Activated T-helper 2 cell treated with anti-CD3 and anti-CD28 coated beads, Interferon-gamma antibody, Interleukin-2, Interleukin-4, amounts not matched to agents 10 μg/mL and 5 μg/mL and 100 μg/mL, durations not matched to agents 14 hours and 24 hours and 36 hours (primary cell): ENCODE measurements at regions of chr10 and their contacts with region 1.

Region 1: DNA sequence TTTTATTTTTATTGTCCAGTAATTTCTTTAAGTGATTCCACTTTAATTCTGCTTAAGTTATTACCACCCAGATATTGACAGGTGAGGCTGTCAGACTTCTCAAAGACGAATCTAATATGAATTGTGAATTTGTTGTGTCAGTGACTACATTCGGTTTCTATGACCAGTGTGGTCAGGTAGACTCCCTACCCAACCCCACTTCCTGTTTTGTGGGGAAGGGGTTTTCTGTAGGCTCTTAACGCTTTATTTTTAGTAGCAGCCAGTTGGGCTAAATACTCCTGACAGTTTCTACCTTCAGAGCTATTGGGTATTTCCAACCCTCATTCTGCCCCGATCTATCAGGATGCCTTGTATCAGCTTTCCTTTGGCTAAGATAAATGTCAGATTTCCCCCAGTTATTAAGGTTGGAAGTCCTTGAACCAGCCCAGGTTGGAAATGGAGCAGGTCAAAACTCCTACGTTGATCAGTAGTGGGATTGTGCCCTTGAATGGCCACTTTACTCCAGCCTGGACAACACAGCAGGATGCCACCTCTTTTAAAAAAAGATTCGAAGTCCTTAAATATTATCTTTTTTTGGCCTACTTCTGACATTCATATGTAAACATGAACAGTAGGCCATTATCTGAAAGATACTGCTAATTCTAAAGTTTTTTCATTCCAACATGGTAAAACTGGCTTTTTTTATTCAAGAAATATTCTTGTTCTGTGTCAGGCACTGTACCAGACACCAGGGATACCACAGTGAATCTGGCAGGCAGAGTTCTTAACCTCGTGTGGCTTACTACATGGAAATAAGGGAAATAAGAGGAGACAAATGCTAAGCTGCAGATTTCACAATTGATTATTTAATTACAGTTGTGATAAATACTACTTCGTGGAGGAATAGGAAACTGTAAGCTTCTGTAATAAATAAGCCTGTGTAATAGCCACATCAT is 133.3 kb upstream of the SAMD8 start:
- DNase-seq: peak; percentile 60
- H3K4me3 Mint-ChIP-seq: peak overlapping the region; percentile 37
- H3K27ac Mint-ChIP-seq: peak overlapping the region; percentile 74
- H3K4me1 Mint-ChIP-seq: peaks cover 49% of the 10 kb centered on the region
- H3K27me3 Mint-ChIP-seq: no peaks in the 10 kb centered on the region

Region 2: GRCh38 chr10:74898201-74898976 is 79.8 kb before region 1 on chr10:
- intact Hi-C with region 1: loop called (anchors 2 kb)
- DNase-seq: peak; percentile 26
- H3K4me3 Mint-ChIP-seq: no peak overlapping the region
- H3K27ac Mint-ChIP-seq: peak overlapping the region; percentile 37
- H3K4me1 Mint-ChIP-seq: peaks cover 50% of the 10 kb centered on the region
- H3K27me3 Mint-ChIP-seq: no peaks in the 10 kb centered on the region